Right cardiac atrium (tissue), 5 donors: ENCODE measurements at regions of chrX and their contacts with region 1.

Region 1: DNA sequence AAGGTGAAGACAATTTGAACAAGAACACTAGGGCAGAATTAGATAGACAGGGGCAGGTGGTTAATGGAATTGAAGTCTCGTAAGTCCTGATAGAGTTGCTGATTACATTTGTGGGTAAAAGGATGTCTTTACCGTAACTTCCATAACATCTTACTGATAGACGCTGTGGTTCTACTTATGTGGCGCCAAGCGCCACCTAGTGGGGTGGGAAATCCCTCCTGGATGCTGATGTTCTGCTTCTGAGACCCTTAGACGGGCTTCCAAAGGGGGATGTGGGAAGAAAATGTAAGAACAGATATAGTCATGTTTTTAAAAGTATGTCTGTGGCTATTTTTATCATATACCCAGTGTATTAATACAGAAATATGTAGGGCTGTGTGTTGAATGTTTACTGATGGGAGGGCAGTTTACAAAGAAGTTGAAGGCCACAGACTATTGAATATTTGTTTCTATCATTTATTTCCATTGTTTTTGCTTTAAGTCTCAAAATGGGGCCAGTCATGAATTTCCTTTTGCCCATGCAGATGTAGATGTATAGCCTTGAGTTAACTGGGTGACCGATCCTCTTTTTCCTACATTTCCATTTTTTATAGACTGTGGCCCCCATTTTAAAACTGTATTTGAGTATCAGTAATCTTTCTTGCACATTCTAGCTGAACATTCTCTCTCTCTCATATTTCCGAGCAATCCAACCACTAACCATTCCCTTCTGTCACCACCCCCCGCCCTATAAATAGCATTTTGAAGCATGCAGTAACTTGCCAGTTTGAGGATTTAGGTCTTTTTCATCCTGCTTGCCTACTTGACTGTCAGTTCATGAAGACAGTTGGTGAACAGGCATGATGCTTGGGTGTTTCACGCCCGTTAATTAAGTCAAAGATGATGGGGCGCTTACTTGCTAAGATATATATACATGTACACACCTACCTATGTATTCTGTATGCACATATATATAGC is 12.1 kb upstream of the TLR8 start:
- DNase-seq: peak in 2 of 3 donors; percentile 15 to 69
- ATAC-seq: no peak
- H3K4me3 ChIP-seq: no peak overlapping the region
- H3K27ac ChIP-seq: no peak overlapping the region
- H3K4me1 ChIP-seq: no peaks in the 10 kb centered on the region
- H3K27me3 ChIP-seq: no peaks in the 10 kb centered on the region

Region 2: DNA sequence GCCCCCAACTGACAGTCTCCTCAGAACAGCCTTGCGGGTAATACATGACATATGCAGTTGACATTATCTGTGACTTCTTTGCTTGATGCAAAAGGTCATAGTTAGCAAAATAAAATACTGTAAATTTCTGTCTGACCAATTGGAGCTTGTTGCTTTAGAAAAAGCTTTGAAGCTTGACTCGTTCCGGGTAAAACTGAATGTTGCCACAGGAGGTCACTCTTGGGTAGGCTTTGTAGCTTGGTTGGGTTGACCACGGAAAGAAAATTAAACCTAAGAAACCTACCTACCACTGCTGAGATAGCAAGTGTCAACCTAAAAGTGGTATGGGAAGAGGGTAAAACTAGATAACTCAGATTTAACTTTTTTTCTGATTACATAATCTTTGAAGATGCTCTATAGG is 79.9 kb before region 1 on chrX:
- intact Hi-C with region 1: loop called in 2 of 4 experiments (anchors 5 kb)
- DNase-seq: no peak
- ATAC-seq: no peak
- H3K4me3 ChIP-seq: no peak overlapping the region
- H3K27ac ChIP-seq: no peak overlapping the region
- H3K4me1 ChIP-seq: no peaks in the 10 kb centered on the region
- H3K27me3 ChIP-seq: no peaks in the 10 kb centered on the region